H1 (cell line): ENCODE measurements at regions of chr9 and their contacts with region 1.

Region 1: GRCh38 chr9:137672907-137673791 is 54.3 kb downstream of the EHMT1 start:
- DNase-seq: no peak
- H3K4me3 ChIP-seq: no peak overlapping the region
- H3K27ac ChIP-seq: no peak overlapping the region
- H3K4me1 ChIP-seq: peaks cover 24 to 46% (median 30%) of the 10 kb centered on the region in 4 experiments
- H3K27me3 ChIP-seq: no peaks in the 10 kb centered on the region
- CTCF ChIP-seq: peak; percentile 30 to 82 (median 79)
- EP300 ChIP-seq: no peak
- POLR2A ChIP-seq: no peak
- RAD21 ChIP-seq: peak; percentile 90 to 91

Region 2: DNA sequence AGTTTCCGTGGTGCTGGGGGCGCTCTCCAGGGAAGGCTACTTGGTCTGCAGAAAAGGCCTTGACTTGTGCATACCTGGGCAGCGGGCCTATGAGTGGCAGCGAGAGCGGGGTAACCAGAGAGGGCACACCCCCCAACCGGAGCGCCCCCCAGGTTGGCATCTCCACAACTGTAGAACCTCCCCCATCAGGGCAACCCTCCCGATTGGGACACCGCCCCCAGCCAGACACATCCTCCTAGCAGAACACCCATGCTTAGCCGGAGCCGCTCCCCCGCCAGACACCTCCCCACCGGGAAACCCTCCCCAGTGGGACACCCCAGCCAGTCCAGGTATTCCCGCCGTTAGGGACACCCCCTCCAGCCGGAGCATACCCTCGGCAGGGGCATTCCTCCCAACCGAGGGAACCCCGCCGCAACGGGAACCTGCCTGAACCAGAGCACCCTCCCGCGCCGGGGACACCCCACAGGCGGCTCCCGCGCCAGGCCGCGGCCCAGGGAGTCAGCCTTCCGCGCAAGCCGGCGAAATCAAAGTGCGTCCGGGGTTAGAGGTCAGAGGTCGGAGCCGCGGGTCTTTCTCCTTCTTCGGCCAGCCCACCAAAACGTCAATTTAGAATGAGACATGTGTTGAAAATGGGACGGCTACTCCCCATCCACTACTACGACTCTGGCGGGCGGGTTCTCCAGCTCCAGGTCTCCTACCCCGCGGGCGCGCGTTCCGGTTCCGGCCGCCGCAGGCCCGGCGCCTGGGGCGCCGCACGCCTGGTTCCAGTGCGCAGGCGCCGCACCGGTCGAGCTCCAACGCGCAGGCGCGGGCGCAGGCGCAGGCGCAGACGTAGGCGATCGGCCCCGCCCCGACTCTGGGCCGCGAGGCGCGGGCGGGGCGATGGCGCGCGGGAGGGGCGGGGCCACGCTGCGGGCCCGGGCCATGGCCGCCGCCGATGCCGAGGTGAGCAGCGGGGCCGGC is 54.8 kb before region 1 on chr9 and contains the start of gene EHMT1:
- CTCF ChIA-PET with region 1: interaction called, 15 read pairs
- POLR2A ChIA-PET with region 1: interaction called, 9 read pairs
- DNase-seq: peak; percentile 46 to 95
- H3K4me3 ChIP-seq: peak within 1 kb of the TSS; percentile 83 to 99 (median 92)
- H3K27ac ChIP-seq: peak within 1 kb of the TSS; percentile 84
- H3K4me1 ChIP-seq: peaks cover 0 to 9% (median 5%) of the 10 kb centered on the region in 4 experiments; a peak in 5 of 7 replicates
- H3K27me3 ChIP-seq: no peaks in the 10 kb centered on the region
- CTCF ChIP-seq: no peak
- EP300 ChIP-seq: no peak
- POLR2A ChIP-seq: no peak; a peak in 2 of 3 replicates
- RAD21 ChIP-seq: no peak
- total RNA-seq, gene EHMT1: 163 and 171 TPM in 2 replicates

Region 3: DNA sequence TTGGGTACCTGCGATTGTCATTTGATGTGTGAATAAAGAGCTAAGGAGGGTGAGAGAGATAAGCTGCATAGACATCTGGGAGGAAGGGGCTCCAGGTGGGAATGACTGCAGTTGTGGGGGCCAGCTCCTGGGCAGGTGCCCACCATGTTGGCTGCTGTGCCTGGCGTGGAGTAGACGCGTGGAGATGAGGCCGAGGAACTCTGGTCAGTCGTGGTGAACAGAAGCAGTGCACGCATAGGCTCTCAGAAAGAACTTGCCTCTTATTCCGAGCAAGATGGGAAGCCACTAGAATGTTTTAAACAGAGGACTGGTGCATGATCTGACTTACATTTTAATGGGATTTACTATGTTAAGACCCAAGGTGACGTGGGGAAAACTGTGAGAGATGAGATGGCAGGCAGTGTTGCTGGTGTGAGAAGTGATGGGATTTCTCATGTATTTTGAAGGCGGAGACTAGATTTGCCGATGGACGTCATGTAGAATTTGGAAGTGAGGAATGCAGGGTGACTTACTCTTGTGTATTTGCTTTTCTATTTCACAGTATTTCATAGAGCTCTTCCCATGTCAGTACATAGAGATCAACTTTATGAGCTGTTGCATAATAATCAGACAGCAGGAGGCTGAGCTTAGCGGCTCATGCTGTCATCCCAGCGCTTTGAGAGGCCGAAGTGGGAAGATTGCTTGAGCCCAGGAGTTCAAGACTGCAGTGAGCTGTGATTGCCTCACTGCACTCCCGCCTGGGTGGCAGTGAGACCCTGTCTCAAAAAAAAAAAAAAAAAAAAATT is 16.8 kb after region 1 on chr9:
- CTCF ChIA-PET with region 1: interaction called, 98 read pairs
- POLR2A ChIA-PET with region 1: interaction called, 5 read pairs
- DNase-seq: no peak
- H3K4me3 ChIP-seq: no peak overlapping the region
- H3K27ac ChIP-seq: no peak overlapping the region
- H3K4me1 ChIP-seq: peaks cover 3 to 26% (median 16%) of the 10 kb centered on the region in 4 experiments; a peak in 6 of 7 replicates
- H3K27me3 ChIP-seq: no peaks in the 10 kb centered on the region
- CTCF ChIP-seq: no peak
- EP300 ChIP-seq: no peak
- POLR2A ChIP-seq: no peak
- RAD21 ChIP-seq: no peak

Region 4: DNA sequence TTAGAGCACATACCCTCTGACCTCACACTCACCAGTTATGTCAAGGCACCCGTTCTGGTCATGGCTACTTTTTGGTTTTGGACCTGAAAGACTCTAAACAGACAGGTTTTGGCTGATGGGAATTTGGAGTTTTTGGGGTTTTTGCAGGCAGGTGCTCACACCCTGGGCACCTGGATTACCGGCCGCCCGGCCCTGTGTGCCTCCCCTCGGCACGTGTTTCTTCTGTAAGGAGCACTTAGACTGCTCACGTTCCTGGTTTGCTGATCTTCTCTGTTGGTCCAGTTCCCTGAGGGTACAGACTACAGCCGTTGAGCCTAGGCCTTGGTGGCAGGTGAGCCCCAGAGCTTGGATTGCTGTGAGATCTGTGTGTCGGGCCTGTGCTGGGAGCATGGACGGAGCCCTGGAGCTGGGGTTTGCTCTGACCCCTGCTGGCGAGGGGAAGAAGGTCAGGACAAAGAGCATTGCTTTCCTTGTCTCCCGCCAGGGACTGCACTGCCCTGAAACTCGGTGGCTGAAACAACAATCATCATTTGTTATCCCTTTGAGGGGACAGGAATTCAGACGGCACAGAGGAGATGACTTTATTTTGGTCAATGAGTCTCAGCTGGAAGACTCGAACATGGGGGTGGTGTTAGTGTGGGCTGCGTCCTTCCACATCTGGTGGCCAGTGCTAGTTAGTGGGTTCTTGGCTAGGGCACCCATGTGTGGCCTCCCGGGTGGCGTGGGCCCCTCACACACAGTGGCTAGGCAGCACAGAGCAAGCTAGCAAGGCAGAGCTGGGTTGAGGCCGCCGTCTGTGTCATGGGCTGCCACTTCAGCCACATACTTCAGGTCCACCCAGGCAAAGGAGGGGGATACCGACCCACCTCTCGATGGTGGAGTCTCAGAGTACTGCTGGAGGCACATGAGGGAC is 22.1 kb after region 1 on chr9:
- CTCF ChIA-PET with region 1: interaction called, 98 read pairs
- POLR2A ChIA-PET with region 1: interaction called, 8 read pairs
- DNase-seq: peak; percentile 54 to 86
- H3K4me3 ChIP-seq: no peak overlapping the region
- H3K27ac ChIP-seq: peak overlapping the region; percentile 56; the same call in 1 of the 2 replicates
- H3K4me1 ChIP-seq: peaks cover 8 to 33% (median 17%) of the 10 kb centered on the region in 4 experiments; a peak in 6 of 7 replicates
- H3K27me3 ChIP-seq: no peaks in the 10 kb centered on the region
- CTCF ChIP-seq: peak; percentile 92 to 97 (median 95)
- EP300 ChIP-seq: no peak
- POLR2A ChIP-seq: no peak
- RAD21 ChIP-seq: peak; percentile 78 to 81

Region 5: DNA sequence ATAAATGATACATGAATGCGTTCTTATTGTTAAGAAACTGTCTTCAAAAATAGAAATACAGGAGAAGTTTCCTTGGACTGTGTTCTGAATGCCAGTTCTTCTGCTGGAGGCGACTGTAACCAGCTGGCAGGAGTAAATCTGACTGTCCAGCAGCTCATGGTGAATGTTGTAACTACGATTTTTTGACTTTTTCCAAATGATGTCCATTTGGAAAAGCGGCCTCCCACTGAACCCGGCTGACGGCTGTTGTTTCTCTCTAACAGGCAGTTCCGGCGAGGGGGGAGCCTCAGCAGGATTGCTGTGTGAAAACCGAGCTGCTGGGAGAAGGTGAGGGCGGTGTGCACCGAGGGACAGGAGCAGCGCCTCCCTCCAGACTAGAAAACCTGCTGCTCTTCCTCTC is 37.6 kb after region 1 on chr9:
- CTCF ChIA-PET with region 1: interaction called, 36 read pairs
- POLR2A ChIA-PET with region 1: interaction called, 5 read pairs
- DNase-seq: no peak
- H3K4me3 ChIP-seq: no peak overlapping the region
- H3K27ac ChIP-seq: no peak overlapping the region
- H3K4me1 ChIP-seq: peaks cover 0 to 16% (median 3%) of the 10 kb centered on the region in 4 experiments; a peak in 5 of 7 replicates
- H3K27me3 ChIP-seq: no peaks in the 10 kb centered on the region
- CTCF ChIP-seq: no peak
- EP300 ChIP-seq: no peak
- POLR2A ChIP-seq: no peak
- RAD21 ChIP-seq: no peak

Region 6: GRCh38 chr9:137731216-137731946 is 58.2 kb after region 1 on chr9:
- CTCF ChIA-PET with region 1: interaction called, 17 read pairs
- POLR2A ChIA-PET with region 1: no interaction called
- DNase-seq: no peak
- H3K4me3 ChIP-seq: no peak overlapping the region
- H3K27ac ChIP-seq: no peak overlapping the region
- H3K4me1 ChIP-seq: no peaks in the 10 kb centered on the region; a peak in 2 of 7 replicates
- H3K27me3 ChIP-seq: no peaks in the 10 kb centered on the region
- CTCF ChIP-seq: no peak
- EP300 ChIP-seq: no peak
- POLR2A ChIP-seq: no peak
- RAD21 ChIP-seq: no peak